MCF 10A (cell line): ENCODE measurements at regions of chr14 and their contacts with region 1.

Region 1: GRCh38 chr14:24123508-24124417 is 6.7 kb upstream of the FITM1 start:
- DNase-seq: no peak
- H3K4me3 Mint-ChIP-seq: no peak overlapping the region
- H3K27ac Mint-ChIP-seq: no peak overlapping the region
- H3K4me1 Mint-ChIP-seq: no peaks in the 10 kb centered on the region
- H3K27me3 Mint-ChIP-seq: no peaks in the 10 kb centered on the region
- CTCF ChIP-seq: no peak

Region 2: DNA sequence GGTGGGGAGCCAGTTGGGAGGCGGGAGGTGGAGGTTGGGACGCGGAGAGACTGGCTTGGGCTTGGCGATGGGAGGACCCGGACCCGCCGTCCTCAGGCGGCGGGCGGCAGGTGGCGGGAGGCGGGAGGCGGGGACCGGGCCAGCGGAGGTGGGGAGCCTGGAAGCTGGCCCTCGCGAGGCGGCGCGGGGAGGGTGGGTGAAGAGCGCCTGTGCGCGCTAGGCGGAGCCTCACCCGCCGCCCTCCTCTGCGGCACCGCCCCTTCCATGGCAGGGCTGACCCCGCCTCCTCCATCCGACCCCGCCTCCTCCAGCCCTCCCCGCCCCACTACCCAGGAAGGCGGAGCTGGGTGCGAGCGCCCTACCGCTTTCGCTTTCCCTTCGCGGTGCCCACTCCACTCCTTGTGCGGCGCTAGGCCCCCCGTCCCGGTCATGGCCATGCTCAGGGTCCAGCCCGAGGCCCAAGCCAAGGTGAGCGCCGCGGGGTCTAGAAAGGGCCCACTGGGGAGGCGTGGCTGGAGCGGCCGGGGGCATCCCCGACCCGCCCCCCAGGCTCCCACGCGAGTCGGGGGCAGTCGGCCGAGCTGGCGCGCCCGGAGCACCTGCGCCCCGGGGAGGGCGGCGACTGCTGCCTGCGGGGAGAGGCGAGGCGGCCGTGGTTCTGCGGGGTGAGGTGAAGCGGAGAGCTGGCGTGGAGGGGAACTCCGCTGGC is 12.2 kb after region 1 on chr14 and contains the start of gene PSME1:
- CTCF ChIA-PET with region 1: interaction called, 3 read pairs
- POLR2A ChIA-PET with region 1: interaction called, 252 read pairs
- intact Hi-C with region 1: no loop called
- DNase-seq: peak; percentile 89
- H3K4me3 Mint-ChIP-seq: peak within 1 kb of the TSS; percentile 75
- H3K27ac Mint-ChIP-seq: peak within 1 kb of the TSS; percentile 86
- H3K4me1 Mint-ChIP-seq: peaks cover 42% of the 10 kb centered on the region
- H3K27me3 Mint-ChIP-seq: no peaks in the 10 kb centered on the region
- CTCF ChIP-seq: no peak
- total RNA-seq, gene PSME1: 126 and 135 TPM in 2 replicates